Activated B cell treated with CpG ODN at 0.5 μM for 24 hours (primary cell): ENCODE measurements at regions of chr1 and their contacts with region 1.

Region 1: DNA sequence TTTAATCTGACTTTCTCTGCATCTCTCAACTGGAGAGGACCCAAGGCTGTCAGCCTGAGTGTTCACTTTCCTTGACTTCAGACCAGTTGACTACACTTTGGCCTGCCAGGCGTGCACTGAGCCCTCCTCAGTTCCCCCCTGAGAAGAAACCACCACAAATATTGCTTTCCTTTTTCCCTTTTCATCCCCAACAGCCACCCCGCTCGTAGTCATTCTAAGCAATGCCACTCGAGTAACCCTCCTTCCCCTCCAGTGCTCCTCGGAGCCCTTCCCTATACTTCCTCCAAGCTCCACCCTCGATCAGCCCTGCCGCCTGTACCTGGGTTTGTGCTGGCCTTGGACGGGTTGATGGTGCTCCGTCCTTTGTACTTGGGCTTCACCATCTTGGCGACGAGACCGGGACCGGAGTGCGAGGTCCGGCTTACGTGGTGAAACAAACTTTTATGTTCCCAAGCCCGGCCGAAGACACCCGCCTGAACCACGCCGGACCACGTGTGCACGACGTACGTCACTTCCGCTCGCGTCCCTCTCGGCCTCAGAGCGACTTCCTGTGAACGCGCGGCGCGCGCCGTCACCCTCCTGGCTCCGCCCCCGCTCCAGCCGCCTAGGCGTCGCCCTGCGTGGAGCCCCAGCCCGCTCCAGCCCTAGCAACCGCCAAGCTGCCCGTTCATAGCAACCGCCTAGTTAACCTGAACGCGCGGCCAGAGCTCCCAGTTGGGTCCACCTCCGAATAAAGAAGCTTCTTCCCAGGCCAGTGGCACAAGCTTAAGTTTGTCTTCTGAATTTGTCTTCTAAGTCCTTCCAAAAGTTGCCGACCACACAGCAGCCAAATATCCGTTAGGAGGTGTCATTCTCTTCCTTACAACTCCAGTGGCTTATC is at the start of gene GNL2:
- DNase-seq: peak; percentile 98
- ATAC-seq: peak; percentile 98
- H3K4me3 Mint-ChIP-seq: peak within 1 kb of the TSS; percentile 99
- H3K27ac Mint-ChIP-seq: peak within 1 kb of the TSS; percentile 96
- H3K4me1 Mint-ChIP-seq: peaks cover 30% of the 10 kb centered on the region
- H3K27me3 Mint-ChIP-seq: peaks cover 3% of the 10 kb centered on the region
- CTCF ChIP-seq: no peak
- total RNA-seq, gene GNL2: 68.0 and 71.4 TPM in 2 replicates

Region 2: GRCh38 chr1:36463803-36464604 is 1131.7 kb before region 1 on chr1 and contains the start of gene MRPS15:
- CTCF ChIA-PET with region 1: no interaction called
- POLR2A ChIA-PET with region 1: no interaction called
- intact Hi-C with region 1: loop called (anchors 5 kb)
- DNase-seq: peak; percentile 90
- ATAC-seq: peak; percentile 95
- H3K4me3 Mint-ChIP-seq: peak within 1 kb of the TSS; percentile 96
- H3K27ac Mint-ChIP-seq: peak within 1 kb of the TSS; percentile 98
- H3K4me1 Mint-ChIP-seq: peaks cover 27% of the 10 kb centered on the region
- H3K27me3 Mint-ChIP-seq: no peaks in the 10 kb centered on the region
- CTCF ChIP-seq: no peak
- total RNA-seq, gene MRPS15: 63.5 and 67.0 TPM in 2 replicates

Region 3: GRCh38 chr1:36871146-36871981 is 724.3 kb before region 1 on chr1:
- CTCF ChIA-PET with region 1: no interaction called
- POLR2A ChIA-PET with region 1: no interaction called
- intact Hi-C with region 1: no loop called
- DNase-seq: no peak
- ATAC-seq: no peak
- H3K4me3 Mint-ChIP-seq: no peak overlapping the region
- H3K27ac Mint-ChIP-seq: no peak overlapping the region
- H3K4me1 Mint-ChIP-seq: no peaks in the 10 kb centered on the region
- H3K27me3 Mint-ChIP-seq: peaks cover 5% of the 10 kb centered on the region
- CTCF ChIP-seq: no peak

Region 4: DNA sequence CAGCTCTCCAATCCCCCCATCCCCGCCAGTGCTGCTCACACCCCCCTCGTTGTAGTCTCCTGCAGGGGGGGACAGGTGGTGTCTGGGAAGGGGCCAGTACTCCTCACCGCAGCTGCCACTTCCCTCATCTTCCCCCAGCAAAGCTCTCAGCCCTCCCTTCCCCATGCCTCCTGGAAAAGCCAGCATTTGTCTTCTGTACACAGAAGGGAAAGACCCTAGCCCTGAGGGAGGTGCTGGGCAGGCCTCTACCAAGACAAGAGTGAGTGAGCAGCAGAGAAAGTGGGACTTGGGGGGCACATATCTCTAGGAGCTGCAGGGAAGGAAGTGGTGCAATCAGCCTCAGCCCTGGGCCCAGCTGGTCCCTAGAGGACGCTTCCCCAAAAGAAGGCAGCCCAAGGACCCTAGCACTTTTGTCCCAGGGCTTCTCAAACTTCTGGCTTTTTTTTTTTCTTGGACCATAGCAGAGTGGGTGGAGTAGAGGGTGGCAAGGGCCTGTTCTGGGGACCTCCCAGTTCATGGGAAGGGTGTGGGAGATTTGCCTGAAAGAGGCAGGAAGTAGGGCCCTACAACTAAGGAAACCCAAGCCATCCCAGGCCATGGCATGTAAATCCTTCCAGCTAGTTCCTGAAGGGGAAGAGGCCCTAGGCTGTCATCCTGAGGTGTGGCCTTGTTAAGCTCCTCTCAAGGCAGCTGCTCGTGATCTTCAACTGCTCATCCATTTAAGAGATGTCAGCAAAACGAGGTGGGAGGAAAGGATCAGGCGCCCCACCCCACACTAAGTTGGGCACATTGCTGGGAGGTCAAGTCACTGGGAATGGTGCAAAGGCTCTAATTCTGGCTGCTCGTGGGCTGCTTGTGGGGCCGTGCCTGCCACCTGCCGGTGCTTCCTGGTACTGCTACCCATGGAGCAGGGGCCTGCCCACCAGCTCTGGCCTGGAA is 108.7 kb before region 1 on chr1:
- CTCF ChIA-PET with region 1: no interaction called
- POLR2A ChIA-PET with region 1: no interaction called
- intact Hi-C with region 1: no loop called
- DNase-seq: peak; percentile 81
- ATAC-seq: peak; percentile 78
- H3K4me3 Mint-ChIP-seq: no peak overlapping the region
- H3K27ac Mint-ChIP-seq: peak overlapping the region; percentile 74
- H3K4me1 Mint-ChIP-seq: peaks cover 27% of the 10 kb centered on the region
- H3K27me3 Mint-ChIP-seq: no peaks in the 10 kb centered on the region
- CTCF ChIP-seq: peak; percentile 90

Region 5: GRCh38 chr1:37514350-37515184 is 81.1 kb before region 1 on chr1 and contains the start of gene MEAF6:
- CTCF ChIA-PET with region 1: interaction called, 4 read pairs
- POLR2A ChIA-PET with region 1: interaction called, 9 read pairs
- intact Hi-C with region 1: loop called (anchors 1 kb)
- DNase-seq: peak; percentile 93
- ATAC-seq: peak; percentile 95
- H3K4me3 Mint-ChIP-seq: peak within 1 kb of the TSS; percentile 96
- H3K27ac Mint-ChIP-seq: peak within 1 kb of the TSS; percentile 98
- H3K4me1 Mint-ChIP-seq: peaks cover 39% of the 10 kb centered on the region
- H3K27me3 Mint-ChIP-seq: no peaks in the 10 kb centered on the region
- CTCF ChIP-seq: no peak
- total RNA-seq, gene MEAF6: 59.9 and 66.5 TPM in 2 replicates

Region 6: GRCh38 chr1:37682334-37682987 is 86.8 kb after region 1 on chr1:
- CTCF ChIA-PET with region 1: interaction called, 181 read pairs
- POLR2A ChIA-PET with region 1: no interaction called
- intact Hi-C with region 1: loop called (anchors 2 kb)
- DNase-seq: peak; percentile 59
- ATAC-seq: peak; percentile 96
- H3K4me3 Mint-ChIP-seq: no peak overlapping the region
- H3K27ac Mint-ChIP-seq: peak overlapping the region; percentile 77
- H3K4me1 Mint-ChIP-seq: peaks cover 6% of the 10 kb centered on the region
- H3K27me3 Mint-ChIP-seq: no peaks in the 10 kb centered on the region
- CTCF ChIP-seq: peak; percentile 91

Region 7: GRCh38 chr1:37859507-37860345 is 264.0 kb after region 1 on chr1 and contains the start of gene MTF1:
- CTCF ChIA-PET with region 1: no interaction called
- POLR2A ChIA-PET with region 1: interaction called, 5 read pairs
- intact Hi-C with region 1: loop called (anchors 1 kb)
- DNase-seq: peak; percentile 88
- ATAC-seq: peak; percentile 98
- H3K4me3 Mint-ChIP-seq: peak within 1 kb of the TSS; percentile 93
- H3K27ac Mint-ChIP-seq: peak within 1 kb of the TSS; percentile 89
- H3K4me1 Mint-ChIP-seq: peaks cover 29% of the 10 kb centered on the region
- H3K27me3 Mint-ChIP-seq: no peaks in the 10 kb centered on the region
- CTCF ChIP-seq: peak; percentile 19
- total RNA-seq, gene MTF1: 30.5 and 36.2 TPM in 2 replicates